ENCODE measurements at regions of chr14 and their contacts with region 1.

Region 1: DNA sequence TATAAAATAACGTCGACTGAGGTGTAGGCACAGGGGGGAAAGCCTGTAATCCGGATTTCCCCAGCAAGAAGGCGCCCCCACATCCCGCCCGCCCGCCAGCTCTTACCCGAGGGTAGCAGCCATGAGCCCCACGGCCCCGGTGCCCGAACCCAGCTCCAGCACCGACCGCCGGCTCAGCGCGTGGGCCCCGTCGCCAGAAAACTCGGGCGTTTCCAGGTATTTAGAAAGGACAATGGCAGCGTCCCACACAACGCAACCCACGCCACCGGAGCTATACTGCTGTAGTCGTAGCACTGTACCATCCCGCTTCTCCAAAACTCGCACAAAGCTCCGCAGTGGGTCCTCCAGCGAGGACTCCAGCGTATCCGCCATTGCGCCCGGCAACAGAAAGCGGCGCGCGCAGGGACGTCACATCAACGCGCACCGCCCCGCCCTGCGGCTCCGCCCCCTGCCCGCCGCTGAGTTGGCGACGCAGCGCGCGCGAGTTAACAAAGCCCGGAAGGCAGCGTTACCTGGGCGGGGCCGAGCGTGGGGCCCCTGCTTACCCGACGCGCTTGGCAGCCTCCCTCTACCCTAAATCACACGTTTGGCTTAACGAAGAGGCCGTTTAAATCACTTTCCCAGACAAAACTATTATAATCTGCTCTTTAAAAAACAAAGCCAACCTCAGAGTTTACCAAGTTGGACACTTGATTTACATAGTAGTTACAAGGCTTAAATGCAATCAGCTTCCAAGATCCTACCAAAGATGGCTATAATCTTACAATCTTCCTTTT is at the start of gene VCPKMT:
- DNase-seq: peak; percentile 90 to 98 (median 95)
- ATAC-seq: peak; percentile 98 to 100 (median 99)
- H3K4me3 ChIP-seq: peak within 1 kb of the TSS; percentile 75 to 96
- H3K4me3 Mint-ChIP-seq: peak within 1 kb of the TSS; percentile 83 to 97 (median 94)
- H3K27ac ChIP-seq: peak within 1 kb of the TSS; percentile 97
- H3K27ac Mint-ChIP-seq: peak within 1 kb of the TSS; percentile 95 to 99
- H3K4me1 ChIP-seq: peaks cover 5 to 16% of the 10 kb centered on the region in 2 experiments
- H3K4me1 Mint-ChIP-seq: peaks cover 23 to 39% (median 34%) of the 10 kb centered on the region in 3 donors
- H3K27me3 ChIP-seq: no peaks in the 10 kb centered on the region
- H3K27me3 Mint-ChIP-seq: no peaks in the 10 kb centered on the region
- total RNA-seq, gene VCPKMT: 16.3 to 24.4 (median 18.3) TPM

Region 2: DNA sequence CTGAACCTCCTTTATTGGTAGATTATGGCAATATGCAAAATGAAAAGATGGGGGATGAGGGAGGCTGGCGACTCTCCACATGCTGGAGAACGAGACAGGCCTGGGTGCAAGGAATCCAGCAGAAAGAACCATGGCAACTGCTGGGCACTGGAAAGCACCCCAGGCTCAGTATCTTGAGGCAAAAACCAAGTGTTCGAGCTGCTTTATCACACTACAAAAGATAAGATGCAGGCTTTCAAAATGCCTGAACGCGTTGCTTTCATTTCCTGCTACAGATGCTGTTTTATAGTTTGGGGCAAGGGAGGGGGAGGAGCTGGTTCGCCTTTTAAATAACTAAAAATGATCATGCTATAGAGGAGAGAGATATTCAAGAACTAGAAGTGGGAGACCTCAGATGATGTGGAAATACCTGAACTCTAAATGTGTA is 675.7 kb after region 1 on chr14:
- CTCF ChIA-PET with region 1: no interaction called
- POLR2A ChIA-PET with region 1: interaction called in 1 of 2 experiments, 12 read pairs
- DNase-seq: peak in 18 of 35 experiments; percentile 8 to 61 (median 22)
- ATAC-seq: peak; percentile 64 to 75 (median 69)
- H3K4me3 ChIP-seq: peak overlapping the region; percentile 20 to 23
- H3K4me3 Mint-ChIP-seq: peak overlapping the region; percentile 66 to 74 (median 74)
- H3K27ac ChIP-seq: peak overlapping the region; percentile 76
- H3K27ac Mint-ChIP-seq: peak overlapping the region; percentile 91 to 98
- H3K4me1 ChIP-seq: peaks cover 54 to 55% of the 10 kb centered on the region in 2 experiments
- H3K4me1 Mint-ChIP-seq: peaks cover 90 to 93% (median 92%) of the 10 kb centered on the region in 3 donors
- H3K27me3 ChIP-seq: no peaks in the 10 kb centered on the region
- H3K27me3 Mint-ChIP-seq: no peaks in the 10 kb centered on the region

Measured in T-cell (primary cell).